A673 (cell line): ENCODE measurements at regions of chr17 and their contacts with region 1.

Region 1: GRCh38 chr17:1055751-1056645 is 59.1 kb downstream of the TIMM22 start:
- DNase-seq: peak; percentile 61
- H3K4me3 ChIP-seq: no peak overlapping the region
- H3K27ac ChIP-seq: no peak overlapping the region
- H3K4me1 ChIP-seq: no peaks in the 10 kb centered on the region
- H3K27me3 ChIP-seq: no peaks in the 10 kb centered on the region
- CTCF ChIP-seq: peak; percentile 74

Region 2: DNA sequence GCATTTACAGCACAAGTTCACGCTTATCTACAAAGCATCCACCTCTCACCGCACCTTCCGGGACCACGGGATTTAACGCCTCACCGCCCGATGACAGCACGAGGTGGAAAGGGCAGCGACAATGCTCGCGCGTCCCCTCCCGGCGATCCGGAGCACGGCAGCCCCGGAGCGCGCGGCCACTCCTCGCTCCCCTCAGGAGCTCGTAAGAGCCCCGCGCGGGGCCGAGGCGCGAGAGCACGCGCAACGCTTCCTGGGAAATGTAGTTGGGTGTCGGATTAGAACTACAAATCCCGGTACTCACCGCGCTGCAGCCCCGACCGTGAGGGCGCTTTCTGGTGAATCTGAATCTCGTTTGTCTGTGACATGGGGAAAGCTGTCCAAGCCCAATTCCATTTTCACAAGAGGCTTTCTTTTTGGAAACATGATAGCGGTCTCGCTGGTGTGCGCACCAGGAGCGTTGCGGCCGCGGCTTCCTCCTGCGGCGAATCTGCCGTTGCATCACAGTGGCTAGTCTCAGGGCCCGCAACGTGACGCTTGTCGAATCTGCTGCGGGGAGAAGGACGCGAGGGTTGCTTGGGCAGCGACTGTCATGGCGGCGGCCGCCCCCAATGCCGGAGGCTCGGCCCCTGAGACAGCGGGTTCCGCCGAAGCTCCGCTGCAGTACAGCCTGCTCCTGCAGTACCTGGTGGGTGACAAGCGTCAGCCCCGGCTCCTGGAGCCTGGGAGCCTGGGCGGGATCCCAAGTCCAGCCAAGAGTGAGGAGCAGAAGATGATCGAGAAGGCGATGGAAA is 59.2 kb before region 1 on chr17 and contains the start of gene TIMM22:
- CTCF ChIA-PET with region 1: interaction called, 13 read pairs
- POLR2A ChIA-PET with region 1: no interaction called
- intact Hi-C with region 1: loop called (anchors 10 kb)
- DNase-seq: peak; percentile 99
- H3K4me3 ChIP-seq: peak within 1 kb of the TSS; percentile 82
- H3K27ac ChIP-seq: peak within 1 kb of the TSS; percentile 99
- H3K4me1 ChIP-seq: peaks cover 6% of the 10 kb centered on the region
- H3K27me3 ChIP-seq: no peaks in the 10 kb centered on the region
- CTCF ChIP-seq: peak; percentile 95
- total RNA-seq, gene TIMM22: 20.0 and 21.8 TPM in 2 replicates

Region 3: GRCh38 chr17:1005361-1005946 is 50.5 kb before region 1 on chr17:
- CTCF ChIA-PET with region 1: interaction called, 4 read pairs
- POLR2A ChIA-PET with region 1: no interaction called
- intact Hi-C with region 1: loop called (anchors 10 kb)
- DNase-seq: peak; percentile 72
- H3K4me3 ChIP-seq: no peak overlapping the region
- H3K27ac ChIP-seq: peak overlapping the region; percentile 53
- H3K4me1 ChIP-seq: peaks cover 13% of the 10 kb centered on the region
- H3K27me3 ChIP-seq: no peaks in the 10 kb centered on the region
- CTCF ChIP-seq: no peak

Region 4: DNA sequence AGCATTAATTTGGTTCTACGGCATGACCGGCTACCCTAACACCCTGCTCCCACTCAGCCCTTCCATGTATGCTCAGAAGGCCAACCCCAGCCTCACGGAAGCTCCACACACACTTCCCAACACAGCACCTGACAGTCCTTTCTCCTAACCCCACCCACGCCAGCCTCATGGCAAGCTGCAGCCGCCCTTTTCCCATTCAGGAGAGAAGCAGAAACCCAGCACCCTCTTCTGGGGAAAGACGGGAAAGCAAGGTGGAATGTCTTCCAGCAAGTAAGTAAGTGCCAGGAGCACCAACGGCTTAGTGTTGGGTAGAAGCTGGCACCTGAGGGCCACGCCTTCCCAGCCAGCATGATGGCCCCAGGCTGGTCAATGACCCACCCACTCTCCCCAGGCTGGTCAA is 91.7 kb after region 1 on chr17:
- CTCF ChIA-PET with region 1: interaction called, 12 read pairs
- POLR2A ChIA-PET with region 1: no interaction called
- intact Hi-C with region 1: no loop called
- DNase-seq: peak; percentile 82
- H3K4me3 ChIP-seq: no peak overlapping the region
- H3K27ac ChIP-seq: no peak overlapping the region
- H3K4me1 ChIP-seq: peaks cover 7% of the 10 kb centered on the region
- H3K27me3 ChIP-seq: no peaks in the 10 kb centered on the region
- CTCF ChIP-seq: peak; percentile 72

Region 5: DNA sequence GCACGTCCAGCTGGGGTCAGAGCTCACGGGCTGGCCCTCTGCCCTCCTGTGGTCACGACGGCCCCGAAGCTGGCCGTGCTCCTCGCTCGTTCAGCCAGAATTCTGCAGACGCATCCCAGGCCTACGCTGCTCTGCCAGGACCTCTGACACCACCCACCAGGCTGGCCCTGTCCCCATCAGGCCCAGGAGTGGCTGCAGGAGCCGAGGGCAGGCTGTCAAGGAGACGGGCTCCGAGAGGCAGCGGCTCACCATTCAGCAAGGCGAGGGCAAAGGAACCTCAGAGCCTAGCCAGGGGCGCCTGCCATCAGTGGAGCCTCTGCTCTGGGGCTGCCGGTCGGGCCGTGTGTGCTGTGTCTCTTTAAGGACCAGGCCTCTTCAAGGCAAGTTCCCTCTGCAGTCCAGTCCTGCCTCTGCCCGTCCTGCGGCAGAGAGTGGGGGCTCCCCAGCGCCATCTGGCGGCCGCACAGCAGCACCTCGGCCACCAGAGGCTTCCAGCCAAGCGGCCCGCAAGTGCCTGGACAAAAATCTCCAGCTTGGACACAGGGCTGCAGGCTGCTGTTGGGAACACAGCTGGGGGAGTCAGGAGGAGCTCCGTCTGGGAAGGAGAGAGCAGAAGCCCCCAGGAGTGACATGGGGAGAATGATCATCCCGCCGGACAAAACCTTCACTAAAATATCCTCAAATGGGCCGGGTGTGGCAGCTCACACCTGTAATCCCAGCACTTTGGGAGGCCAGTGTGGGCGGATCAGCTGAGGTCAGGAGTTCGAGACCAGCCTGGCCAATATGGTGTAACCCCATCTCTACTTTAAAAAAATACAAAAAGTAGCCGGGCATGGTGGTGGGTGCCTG is 131.1 kb after region 1 on chr17:
- CTCF ChIA-PET with region 1: interaction called, 6 read pairs
- POLR2A ChIA-PET with region 1: no interaction called
- intact Hi-C with region 1: loop called (anchors 2 kb)
- DNase-seq: peak; percentile 87
- H3K4me3 ChIP-seq: no peak overlapping the region
- H3K27ac ChIP-seq: no peak overlapping the region
- H3K4me1 ChIP-seq: no peaks in the 10 kb centered on the region
- H3K27me3 ChIP-seq: peaks cover 3% of the 10 kb centered on the region
- CTCF ChIP-seq: peak; percentile 98